K562 (cell line): ENCODE measurements at regions of chr11 and their contacts with region 1.

Region 1: DNA sequence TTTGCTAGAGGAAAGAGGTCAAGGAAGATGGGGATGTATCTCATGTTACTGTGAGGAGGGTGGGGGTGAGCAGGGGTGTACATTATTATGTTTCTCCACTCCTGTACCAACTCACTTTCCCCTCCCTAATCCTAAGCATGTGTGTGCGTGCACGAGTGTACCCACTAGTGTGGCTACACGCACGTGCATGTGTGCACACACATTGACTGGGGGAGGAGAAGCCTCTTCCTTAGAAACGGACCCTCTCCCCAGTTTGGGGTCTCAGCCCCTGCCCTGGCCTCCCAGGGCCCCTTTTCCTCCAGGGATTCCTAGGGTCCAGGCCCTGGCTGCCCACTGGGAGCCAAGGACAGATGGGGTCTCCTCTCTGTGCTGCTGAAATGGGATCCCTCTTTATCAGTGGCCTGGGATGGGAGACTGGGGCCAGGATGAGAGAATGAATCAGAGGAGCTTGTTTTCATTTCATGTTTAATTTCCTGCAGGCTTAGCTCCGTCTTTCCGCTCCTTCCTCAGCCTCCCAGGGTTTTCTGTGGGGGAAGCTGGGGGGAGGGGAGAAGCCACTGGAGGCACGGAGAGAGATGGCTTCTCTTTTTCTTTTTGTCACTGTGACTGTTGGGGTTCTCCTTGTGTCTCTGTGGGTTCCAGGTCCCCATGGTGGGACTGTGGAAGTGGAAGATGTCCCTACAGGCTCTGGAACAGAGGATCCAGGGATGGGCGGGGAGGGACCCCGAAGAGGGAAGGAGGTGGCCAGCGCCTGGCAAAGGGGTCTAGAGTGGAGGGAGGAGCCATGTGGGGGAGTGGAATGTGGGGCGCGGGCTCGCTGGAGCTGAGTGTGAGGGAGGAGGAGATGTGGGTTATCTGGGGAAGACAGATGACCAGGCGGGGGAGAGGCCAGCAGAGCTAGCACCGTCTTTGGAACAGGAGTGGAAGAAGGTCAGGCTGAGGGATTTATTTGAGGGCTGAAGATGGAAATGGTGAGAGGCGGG is 40.3 kb downstream of the ALX4 start:
- DNase-seq: peak; percentile 91 to 94 (median 93)
- ATAC-seq: peak; percentile 90
- H3K4me3 ChIP-seq: peak overlapping the region; percentile 11; the same call in 1 of the 2 replicates
- H3K27ac ChIP-seq: peak overlapping the region; percentile 49; the same call in 2 of the 3 replicates
- H3K4me1 ChIP-seq: peaks cover 50 to 62% of the 10 kb centered on the region in 2 experiments
- H3K27me3 ChIP-seq: no peaks in the 10 kb centered on the region
- CTCF ChIP-seq: no peak
- EP300 ChIP-seq: peak; percentile 90
- POLR2A ChIP-seq: no peak
- RAD21 ChIP-seq: peak in 1 of 2 experiments; percentile 23; a peak in 1 of 4 replicates

Region 2: DNA sequence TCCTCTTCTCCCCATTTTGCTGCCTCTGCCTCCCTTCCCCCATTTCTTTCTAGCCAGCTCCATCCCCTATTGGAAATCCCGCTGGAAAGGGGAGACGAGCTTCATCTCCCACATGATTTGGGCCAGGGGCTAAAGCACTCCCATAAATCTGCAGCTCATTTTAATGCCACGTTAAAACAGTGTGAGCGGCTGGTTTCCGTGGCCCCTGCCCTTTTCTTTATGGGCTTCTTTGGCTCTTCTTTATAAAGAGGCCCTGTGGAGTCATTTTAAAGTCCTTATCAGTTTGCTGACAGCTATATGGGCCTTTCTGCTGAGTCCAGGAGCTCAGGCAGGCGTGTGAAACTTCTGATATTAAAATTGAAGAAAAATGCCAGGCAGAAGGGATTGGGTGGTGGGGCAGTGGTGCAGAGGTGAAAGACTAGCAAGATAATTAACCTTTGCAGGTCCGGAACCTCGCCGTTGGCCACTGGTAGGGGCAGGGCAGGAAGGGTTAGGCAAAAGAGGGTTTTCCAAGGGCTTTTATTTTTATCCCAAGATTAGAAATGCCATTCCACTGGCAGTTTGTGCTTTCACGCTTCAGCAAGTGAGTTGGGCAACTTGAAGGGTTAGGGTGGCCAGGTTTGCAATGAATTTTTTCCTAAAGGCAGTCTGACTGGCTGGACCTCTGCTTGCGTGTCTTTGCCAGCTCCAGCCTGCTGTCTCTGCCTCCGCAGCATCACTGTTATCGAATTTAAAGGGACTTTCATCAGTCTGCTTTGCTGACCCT is 129.9 kb before region 1 on chr11:
- CTCF ChIA-PET with region 1: no interaction called
- POLR2A ChIA-PET with region 1: no interaction called
- in situ Hi-C with region 1: no loop called
- intact Hi-C with region 1: loop called (anchors 5 kb)
- DNase-seq: peak in 3 of 4 experiments; percentile 23 to 58 (median 45)
- ATAC-seq: peak; percentile 89
- H3K4me3 ChIP-seq: no peak overlapping the region
- H3K27ac ChIP-seq: peak overlapping the region; percentile 11; the same call in 2 of the 3 replicates
- H3K4me1 ChIP-seq: peaks cover 10 to 27% of the 10 kb centered on the region in 2 experiments
- H3K27me3 ChIP-seq: no peaks in the 10 kb centered on the region
- CTCF ChIP-seq: no peak
- EP300 ChIP-seq: no peak
- POLR2A ChIP-seq: no peak
- RAD21 ChIP-seq: no peak; a peak in 1 of 4 replicates

Region 3: GRCh38 chr11:44178381-44178780 is 91.3 kb before region 1 on chr11:
- CTCF ChIA-PET with region 1: no interaction called
- POLR2A ChIA-PET with region 1: interaction called, 3 read pairs
- in situ Hi-C with region 1: no loop called
- intact Hi-C with region 1: loop called (anchors 5 kb)
- DNase-seq: peak in 2 of 4 experiments; percentile 21 to 28
- ATAC-seq: peak; percentile 77
- H3K4me3 ChIP-seq: no peak overlapping the region
- H3K27ac ChIP-seq: no peak overlapping the region
- H3K4me1 ChIP-seq: peaks cover 0 to 17% of the 10 kb centered on the region in 2 experiments; a peak in 2 of 5 replicates
- H3K27me3 ChIP-seq: no peaks in the 10 kb centered on the region
- CTCF ChIP-seq: peak in 1 of 3 experiments; percentile 34; a peak in 2 of 6 replicates
- EP300 ChIP-seq: no peak
- POLR2A ChIP-seq: no peak
- RAD21 ChIP-seq: peak; percentile 54 to 61